ENCODE measurements at regions of chr1 and their contacts with region 1.

Region 1: DNA sequence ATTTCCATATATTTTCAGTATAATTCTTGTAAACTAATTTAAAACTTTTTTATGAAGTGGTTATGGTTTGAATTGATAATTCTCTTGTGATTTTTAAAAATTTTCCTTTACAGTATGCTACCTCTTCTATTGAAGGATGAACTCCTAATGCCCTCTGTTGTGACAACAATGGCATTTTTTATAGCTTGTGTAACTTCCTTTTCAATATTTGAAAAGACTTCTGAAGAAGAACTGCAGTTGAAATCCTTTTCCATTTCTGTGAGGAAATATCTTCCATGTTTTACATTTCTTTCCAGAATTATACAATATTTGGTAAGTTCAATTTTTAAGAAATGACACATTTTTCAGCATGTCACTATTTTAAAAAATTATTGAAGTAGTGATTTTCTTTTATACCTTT is 61.4 kb downstream of the ALG6 start:
- DNase-seq: no peak
- H3K4me3 Mint-ChIP-seq: no peak overlapping the region
- H3K27ac Mint-ChIP-seq: no peak overlapping the region
- H3K4me1 Mint-ChIP-seq: no peaks in the 10 kb centered on the region
- H3K27me3 Mint-ChIP-seq: no peaks in the 10 kb centered on the region

Region 2: GRCh38 chr1:63411066-63411465 is 17.7 kb before region 1 on chr1:
- intact Hi-C with region 1: loop called (anchors 2 kb)
- DNase-seq: no peak
- H3K4me3 Mint-ChIP-seq: no peak overlapping the region
- H3K27ac Mint-ChIP-seq: no peak overlapping the region
- H3K4me1 Mint-ChIP-seq: no peaks in the 10 kb centered on the region
- H3K27me3 Mint-ChIP-seq: no peaks in the 10 kb centered on the region